IMR-90 (cell line): ENCODE measurements at regions of chr9 and their contacts with region 1.

Region 1: DNA sequence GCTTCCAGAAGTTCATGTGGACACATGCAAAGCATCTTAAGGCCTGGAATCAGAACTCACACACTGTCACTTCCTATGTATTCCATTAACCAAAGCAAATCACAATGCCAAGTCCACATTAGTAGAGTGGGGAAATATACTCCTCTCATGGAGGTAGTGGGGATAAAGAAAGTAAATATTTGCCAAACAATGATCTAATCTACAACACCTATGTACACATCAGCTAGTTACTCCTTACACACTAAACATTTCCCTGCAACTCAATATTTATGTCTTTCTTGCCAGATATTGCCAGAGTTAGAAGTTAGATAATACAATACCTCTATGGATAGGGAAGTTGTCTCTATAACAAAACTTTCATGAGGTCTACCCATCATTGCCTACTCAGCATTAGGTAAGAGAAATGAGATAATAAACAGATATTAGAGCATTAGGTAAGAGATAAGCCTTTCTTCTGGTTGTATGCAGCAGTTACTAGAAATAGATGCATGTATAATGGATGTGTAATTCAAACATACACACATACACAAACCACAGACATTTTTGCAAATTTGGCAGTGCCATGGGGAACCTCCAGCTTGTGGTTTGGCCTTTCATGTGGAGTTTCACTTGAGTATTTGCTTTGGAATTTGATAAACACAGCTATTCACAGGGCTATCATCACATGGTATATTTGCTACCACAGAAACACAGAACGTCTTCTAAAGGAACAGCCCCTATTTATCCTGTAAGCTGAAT is 196.5 kb downstream of the TLE1 start:
- DNase-seq: peak; percentile 100
- ATAC-seq: peak; percentile 92
- H3K4me3 ChIP-seq: no peak overlapping the region
- H3K27ac ChIP-seq: no peak overlapping the region
- H3K4me1 ChIP-seq: peaks cover 7% of the 10 kb centered on the region
- H3K27me3 ChIP-seq: no peaks in the 10 kb centered on the region; the same call in none of the 2 replicates
- CTCF ChIP-seq: no peak
- POLR2A ChIP-seq: no peak
- RAD21 ChIP-seq: no peak

Region 2: GRCh38 chr9:81431641-81432040 is 61.2 kb before region 1 on chr9:
- CTCF ChIA-PET with region 1: no interaction called
- POLR2A ChIA-PET with region 1: no interaction called
- dilution Hi-C with region 1: no loop called
- in situ Hi-C with region 1: no loop called
- intact Hi-C with region 1: loop called (anchors 2 kb)
- DNase-seq: peak; percentile 99
- ATAC-seq: peak; percentile 99
- H3K4me3 ChIP-seq: no peak overlapping the region
- H3K27ac ChIP-seq: peak overlapping the region; percentile 69; the same call in 1 of the 2 replicates
- H3K4me1 ChIP-seq: peaks cover 2% of the 10 kb centered on the region; the same call in 1 of the 2 replicates
- H3K27me3 ChIP-seq: no peaks in the 10 kb centered on the region
- CTCF ChIP-seq: no peak
- POLR2A ChIP-seq: no peak
- RAD21 ChIP-seq: no peak; the same call in none of the 2 replicates

Region 3: DNA sequence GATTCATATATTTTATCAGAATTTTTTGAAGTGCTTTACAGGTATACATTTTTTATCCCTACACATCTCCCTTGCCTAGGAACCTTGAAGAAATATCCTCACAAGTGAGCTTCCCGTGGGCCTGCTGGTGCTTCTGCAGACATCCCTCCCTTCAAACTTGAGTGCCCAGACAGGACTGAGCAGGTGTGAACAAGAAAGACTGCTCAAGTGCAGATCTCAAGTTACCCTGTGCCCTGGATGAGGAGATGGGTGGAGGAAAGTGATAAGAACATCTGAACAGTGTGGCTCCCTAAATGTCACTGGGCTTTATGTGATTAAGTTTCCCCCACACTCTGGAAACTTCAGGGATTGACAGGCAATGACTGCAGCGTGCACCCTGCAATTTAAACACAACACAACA is 13.3 kb before region 1 on chr9:
- CTCF ChIA-PET with region 1: no interaction called
- POLR2A ChIA-PET with region 1: no interaction called
- dilution Hi-C with region 1: no loop called
- in situ Hi-C with region 1: no loop called
- intact Hi-C with region 1: loop called (anchors 1 kb)
- DNase-seq: no peak
- ATAC-seq: no peak
- H3K4me3 ChIP-seq: no peak overlapping the region
- H3K27ac ChIP-seq: no peak overlapping the region
- H3K4me1 ChIP-seq: peaks cover 3% of the 10 kb centered on the region; the same call in 1 of the 2 replicates
- H3K27me3 ChIP-seq: no peaks in the 10 kb centered on the region
- CTCF ChIP-seq: no peak
- POLR2A ChIP-seq: no peak
- RAD21 ChIP-seq: no peak

Region 4: GRCh38 chr9:81538890-81539289 is 46.0 kb after region 1 on chr9:
- CTCF ChIA-PET with region 1: no interaction called
- POLR2A ChIA-PET with region 1: no interaction called
- dilution Hi-C with region 1: no loop called
- in situ Hi-C with region 1: no loop called
- intact Hi-C with region 1: no loop called
- DNase-seq: peak; percentile 28
- ATAC-seq: no peak
- H3K4me3 ChIP-seq: no peak overlapping the region
- H3K27ac ChIP-seq: no peak overlapping the region
- H3K4me1 ChIP-seq: no peaks in the 10 kb centered on the region; the same call in 1 of the 2 replicates
- H3K27me3 ChIP-seq: no peaks in the 10 kb centered on the region
- CTCF ChIP-seq: no peak
- POLR2A ChIP-seq: no peak
- RAD21 ChIP-seq: no peak

Region 5: GRCh38 chr9:81609782-81610739 is 117.2 kb after region 1 on chr9:
- CTCF ChIA-PET with region 1: no interaction called
- POLR2A ChIA-PET with region 1: no interaction called
- dilution Hi-C with region 1: no loop called
- in situ Hi-C with region 1: no loop called
- intact Hi-C with region 1: loop called (anchors 1 kb)
- DNase-seq: peak; percentile 40
- ATAC-seq: peak; percentile 19; the same call in 1 of the 2 replicates
- H3K4me3 ChIP-seq: no peak overlapping the region
- H3K27ac ChIP-seq: no peak overlapping the region
- H3K4me1 ChIP-seq: peaks cover 16% of the 10 kb centered on the region
- H3K27me3 ChIP-seq: no peaks in the 10 kb centered on the region
- CTCF ChIP-seq: no peak
- POLR2A ChIP-seq: no peak
- RAD21 ChIP-seq: no peak